ENCODE measurements at regions of chr19 and their contacts with region 1.

Region 1: GRCh38 chr19:35899547-35900214 is 659 bp downstream of the NFKBID start:
- DNase-seq: peak; percentile 78 to 91 (median 84)
- ATAC-seq: peak; percentile 49 to 64
- H3K4me3 Mint-ChIP-seq: peak overlapping the region; percentile 90 to 100 (median 95)
- H3K27ac Mint-ChIP-seq: peak overlapping the region; percentile 94 to 99 (median 98)
- H3K4me1 Mint-ChIP-seq: peaks cover 28 to 74% (median 60%) of the 10 kb centered on the region in 4 donors
- H3K27me3 Mint-ChIP-seq: no peaks in the 10 kb centered on the region

Region 2: GRCh38 chr19:35882114-35882832 is 17.4 kb before region 1 on chr19:
- POLR2A ChIA-PET with region 1: interaction called, 16 read pairs
- DNase-seq: peak in 8 of 10 donors; percentile 22 to 77 (median 52)
- ATAC-seq: peak; percentile 51 to 61
- H3K4me3 Mint-ChIP-seq: no peak overlapping the region
- H3K27ac Mint-ChIP-seq: peak overlapping the region in 1 of 10 donors; percentile 67
- H3K4me1 Mint-ChIP-seq: peaks cover 6 to 17% (median 13%) of the 10 kb centered on the region in 4 donors
- H3K27me3 Mint-ChIP-seq: peaks cover 5 to 30% (median 18%) of the 10 kb centered on the region in 5 donors

Measured in naive thymus-derived CD8-positive, alpha-beta T cell (primary cell).